ENCODE measurements at regions of chr2 and their contacts with region 1.

Region 1: DNA sequence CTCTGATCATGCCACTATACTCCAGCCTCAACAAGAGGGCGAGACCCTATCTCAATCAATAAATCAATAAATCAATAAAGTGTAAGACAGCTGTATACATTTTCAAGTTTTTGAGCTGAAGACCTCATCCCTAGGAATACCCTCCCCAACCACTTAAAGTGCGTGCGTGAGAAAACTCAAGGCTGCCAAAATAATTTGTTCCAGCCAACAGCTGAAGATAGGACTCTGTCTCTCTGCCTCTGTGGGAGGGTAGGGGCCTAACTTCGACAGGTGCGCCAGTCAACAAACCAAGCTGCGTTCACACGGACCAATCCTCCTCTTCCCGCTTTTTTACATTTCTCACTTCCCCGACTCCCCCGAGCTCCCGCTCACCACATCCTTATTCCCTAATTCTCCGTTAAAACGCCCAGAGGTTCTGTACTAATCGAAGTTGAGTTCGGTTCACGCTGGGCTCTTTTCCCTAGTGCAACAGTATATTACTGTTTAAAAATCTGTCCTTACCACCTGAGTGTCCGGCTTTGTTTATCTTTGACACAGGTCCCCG is 618 bp downstream of the POLR2D start:
- DNase-seq: peak; percentile 25
- H3K4me3 Mint-ChIP-seq: peak overlapping the region; percentile 85
- H3K27ac Mint-ChIP-seq: peak overlapping the region; percentile 87
- H3K4me1 Mint-ChIP-seq: peaks cover 20% of the 10 kb centered on the region
- H3K27me3 Mint-ChIP-seq: no peaks in the 10 kb centered on the region
- CTCF ChIP-seq: no peak

Region 2: GRCh38 chr2:127701193-127701650 is 156.1 kb before region 1 on chr2 and contains the start of gene SFT2D3:
- CTCF ChIA-PET with region 1: no interaction called
- POLR2A ChIA-PET with region 1: interaction called, 10 read pairs
- intact Hi-C with region 1: no loop called
- DNase-seq: peak; percentile 86
- H3K4me3 Mint-ChIP-seq: peak within 1 kb of the TSS; percentile 84
- H3K27ac Mint-ChIP-seq: peak within 1 kb of the TSS; percentile 94
- H3K4me1 Mint-ChIP-seq: peaks cover 19% of the 10 kb centered on the region
- H3K27me3 Mint-ChIP-seq: no peaks in the 10 kb centered on the region
- CTCF ChIP-seq: no peak
- total RNA-seq, gene SFT2D3: 3.6 and 4.1 TPM in 2 replicates

Region 3: GRCh38 chr2:127770973-127771735 is 86.2 kb before region 1 on chr2:
- CTCF ChIA-PET with region 1: interaction called, 3 read pairs
- POLR2A ChIA-PET with region 1: no interaction called
- intact Hi-C with region 1: loop called (anchors 5 kb)
- DNase-seq: peak; percentile 88
- H3K4me3 Mint-ChIP-seq: no peak overlapping the region
- H3K27ac Mint-ChIP-seq: peak overlapping the region; percentile 89
- H3K4me1 Mint-ChIP-seq: peaks cover 18% of the 10 kb centered on the region
- H3K27me3 Mint-ChIP-seq: no peaks in the 10 kb centered on the region
- CTCF ChIP-seq: no peak

Region 4: DNA sequence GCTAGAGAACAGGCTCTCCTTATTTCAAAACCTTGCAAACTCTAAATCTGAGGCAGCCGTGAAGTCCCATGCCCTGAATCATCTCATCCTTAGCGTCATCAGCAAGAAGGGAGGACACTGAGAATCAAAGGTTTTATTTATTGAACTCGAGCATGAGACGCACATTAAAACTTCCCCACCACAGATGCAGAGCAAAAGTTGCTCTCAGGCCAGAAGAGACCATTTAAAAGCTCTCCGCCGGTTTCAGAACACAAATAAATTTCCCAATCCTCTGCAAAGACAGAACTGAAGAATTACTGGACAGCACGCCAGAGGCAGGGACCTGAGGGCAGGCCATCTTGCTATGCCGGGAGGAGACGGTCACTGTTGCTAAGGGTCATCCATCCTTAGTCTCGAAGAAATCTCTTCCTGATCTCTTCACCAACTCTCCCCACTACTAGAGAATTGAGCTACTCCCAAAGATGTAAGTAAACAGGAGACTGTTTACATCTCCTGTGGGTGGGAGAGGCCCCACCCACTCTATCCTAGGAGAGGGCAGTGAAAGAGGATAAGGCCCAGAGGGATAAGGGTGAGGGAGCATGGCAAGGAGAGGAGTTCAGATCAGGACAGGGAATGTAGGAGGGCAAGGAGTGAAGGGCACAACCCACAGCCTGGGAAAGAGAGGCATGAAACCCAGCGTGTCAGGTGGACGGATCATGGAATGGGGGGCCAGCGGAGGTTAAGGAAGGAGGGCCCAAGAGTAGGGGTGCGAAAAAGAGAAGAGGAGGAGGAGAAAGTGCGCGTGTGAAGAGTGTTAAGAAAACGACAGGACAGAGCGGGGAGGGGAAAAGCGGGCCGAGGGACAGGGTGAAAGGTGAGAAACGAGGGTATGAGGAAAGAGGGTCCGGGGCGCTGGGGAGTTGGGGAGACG is 27.4 kb after region 1 on chr2:
- CTCF ChIA-PET with region 1: interaction called, 8 read pairs
- POLR2A ChIA-PET with region 1: interaction called, 25 read pairs
- intact Hi-C with region 1: no loop called
- DNase-seq: peak; percentile 31
- H3K4me3 Mint-ChIP-seq: peak overlapping the region; percentile 81
- H3K27ac Mint-ChIP-seq: peak overlapping the region; percentile 84
- H3K4me1 Mint-ChIP-seq: peaks cover 19% of the 10 kb centered on the region
- H3K27me3 Mint-ChIP-seq: no peaks in the 10 kb centered on the region
- CTCF ChIP-seq: no peak

Region 5: DNA sequence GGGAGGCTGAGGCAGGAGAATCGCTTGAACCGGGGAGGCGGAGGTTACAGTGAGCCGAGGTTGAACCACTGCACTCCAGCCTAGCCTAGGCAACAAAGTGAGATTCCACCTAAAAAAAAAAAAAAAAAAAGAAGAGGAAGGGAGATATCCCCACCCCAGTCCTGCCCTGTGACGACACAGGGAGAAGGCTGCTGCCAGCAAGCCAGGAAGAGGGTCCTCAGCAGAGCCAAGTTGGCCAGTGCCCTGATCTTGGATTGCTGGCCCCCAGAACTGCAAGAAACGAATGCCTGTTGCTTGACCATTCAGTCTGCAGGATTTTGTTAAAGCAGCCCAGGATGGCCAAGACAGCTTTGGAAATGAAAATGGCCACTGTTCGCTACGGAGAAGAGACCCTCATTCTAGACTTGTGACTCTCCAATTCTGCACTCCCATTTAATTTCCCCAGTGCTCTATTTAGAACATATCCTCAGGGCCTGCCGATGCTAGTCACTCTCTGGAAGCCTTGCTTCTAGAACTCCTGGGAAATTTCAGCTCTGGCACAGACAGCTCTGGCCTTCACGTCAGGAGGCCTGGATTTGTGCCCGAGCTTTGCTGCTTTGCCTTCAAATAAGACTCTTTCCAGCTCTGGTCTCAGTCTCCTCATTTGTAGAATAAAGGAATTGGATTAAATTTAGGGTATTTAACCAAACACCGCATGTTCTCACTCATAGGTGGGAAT is 44.2 kb after region 1 on chr2:
- CTCF ChIA-PET with region 1: no interaction called
- POLR2A ChIA-PET with region 1: no interaction called
- intact Hi-C with region 1: no loop called
- DNase-seq: no peak
- H3K4me3 Mint-ChIP-seq: no peak overlapping the region
- H3K27ac Mint-ChIP-seq: no peak overlapping the region
- H3K4me1 Mint-ChIP-seq: no peaks in the 10 kb centered on the region
- H3K27me3 Mint-ChIP-seq: no peaks in the 10 kb centered on the region
- CTCF ChIP-seq: no peak

Measured in MCF 10A (cell line).